Naive thymus-derived CD4-positive, alpha-beta T cell (primary cell): ENCODE measurements at regions of chr17 and their contacts with region 1.

Region 1: GRCh38 chr17:36117505-36118382 is 14.1 kb downstream of the CCL4 start:
- DNase-seq: no peak
- ATAC-seq: no peak
- H3K4me3 ChIP-seq: no peak overlapping the region
- H3K4me3 Mint-ChIP-seq: no peak overlapping the region
- H3K27ac ChIP-seq: no peak overlapping the region
- H3K27ac Mint-ChIP-seq: no peak overlapping the region
- H3K4me1 ChIP-seq: no peaks in the 10 kb centered on the region
- H3K4me1 Mint-ChIP-seq: no peaks in the 10 kb centered on the region
- H3K27me3 ChIP-seq: no peaks in the 10 kb centered on the region
- H3K27me3 Mint-ChIP-seq: peaks cover 0 to 20% (median 11%) of the 10 kb centered on the region in 5 donors

Region 2: DNA sequence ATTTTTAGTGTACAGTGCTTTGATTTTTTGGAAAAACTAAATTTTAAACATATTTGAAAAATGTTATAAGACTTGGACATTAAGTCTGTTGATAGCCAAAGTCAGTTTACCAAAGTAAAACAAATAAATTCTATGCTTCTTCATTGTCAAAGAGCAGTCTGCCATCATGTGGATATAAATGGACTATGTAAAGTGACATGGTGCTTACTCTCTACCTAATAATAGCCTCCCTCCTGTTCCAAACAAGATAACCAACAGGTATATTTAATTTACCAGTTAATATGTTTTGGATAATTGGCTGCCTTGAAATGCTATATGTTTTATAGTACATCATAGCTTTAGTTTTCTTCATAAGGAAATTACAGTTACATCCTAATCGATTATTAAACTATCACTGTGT is 292.5 kb before region 1 on chr17:
- CTCF ChIA-PET with region 1: no interaction called
- POLR2A ChIA-PET with region 1: no interaction called
- intact Hi-C with region 1: no loop called
- DNase-seq: no peak
- ATAC-seq: no peak
- H3K4me3 ChIP-seq: no peak overlapping the region
- H3K4me3 Mint-ChIP-seq: no peak overlapping the region
- H3K27ac ChIP-seq: no peak overlapping the region
- H3K27ac Mint-ChIP-seq: peak overlapping the region in 3 of 9 donors; percentile 13 to 72 (median 19)
- H3K4me1 ChIP-seq: no peaks in the 10 kb centered on the region
- H3K4me1 Mint-ChIP-seq: peaks cover 0 to 19% (median 9%) of the 10 kb centered on the region in 7 donors
- H3K27me3 ChIP-seq: no peaks in the 10 kb centered on the region
- H3K27me3 Mint-ChIP-seq: no peaks in the 10 kb centered on the region

Region 3: GRCh38 chr17:36017799-36018198 is 99.9 kb before region 1 on chr17 and contains the start of gene CCL23:
- CTCF ChIA-PET with region 1: no interaction called
- POLR2A ChIA-PET with region 1: no interaction called
- intact Hi-C with region 1: no loop called
- DNase-seq: no peak
- ATAC-seq: peak; percentile 26
- H3K4me3 ChIP-seq: no peak within 1 kb of the TSS
- H3K4me3 Mint-ChIP-seq: no peak within 1 kb of the TSS
- H3K27ac ChIP-seq: no peak within 1 kb of the TSS
- H3K27ac Mint-ChIP-seq: no peak within 1 kb of the TSS
- H3K4me1 ChIP-seq: no peaks in the 10 kb centered on the region
- H3K4me1 Mint-ChIP-seq: peaks cover 0 to 6% (median 0%) of the 10 kb centered on the region in 7 donors
- H3K27me3 ChIP-seq: no peaks in the 10 kb centered on the region
- H3K27me3 Mint-ChIP-seq: peaks cover 17 to 51% (median 30%) of the 10 kb centered on the region in 5 donors
- total RNA-seq, gene CCL23: not detected

Region 4: GRCh38 chr17:36183001-36183971 is 65.5 kb after region 1 on chr17:
- CTCF ChIA-PET with region 1: no interaction called
- POLR2A ChIA-PET with region 1: no interaction called
- intact Hi-C with region 1: loop called in 1 of 2 experiments (anchors 10 kb)
- DNase-seq: no peak
- ATAC-seq: peak; percentile 49
- H3K4me3 ChIP-seq: peak overlapping the region; percentile 47
- H3K4me3 Mint-ChIP-seq: peak overlapping the region in 2 of 10 donors; percentile 61 to 72
- H3K27ac ChIP-seq: no peak overlapping the region
- H3K27ac Mint-ChIP-seq: no peak overlapping the region
- H3K4me1 ChIP-seq: peaks cover 0 to 26% of the 10 kb centered on the region in 2 donors
- H3K4me1 Mint-ChIP-seq: peaks cover 0 to 15% (median 0%) of the 10 kb centered on the region in 7 donors
- H3K27me3 ChIP-seq: no peaks in the 10 kb centered on the region
- H3K27me3 Mint-ChIP-seq: peaks cover 47 to 78% (median 62%) of the 10 kb centered on the region in 5 donors